Mammary epithelial cell (primary cell): ENCODE measurements at regions of chr11 and their contacts with region 1.

Region 1: DNA sequence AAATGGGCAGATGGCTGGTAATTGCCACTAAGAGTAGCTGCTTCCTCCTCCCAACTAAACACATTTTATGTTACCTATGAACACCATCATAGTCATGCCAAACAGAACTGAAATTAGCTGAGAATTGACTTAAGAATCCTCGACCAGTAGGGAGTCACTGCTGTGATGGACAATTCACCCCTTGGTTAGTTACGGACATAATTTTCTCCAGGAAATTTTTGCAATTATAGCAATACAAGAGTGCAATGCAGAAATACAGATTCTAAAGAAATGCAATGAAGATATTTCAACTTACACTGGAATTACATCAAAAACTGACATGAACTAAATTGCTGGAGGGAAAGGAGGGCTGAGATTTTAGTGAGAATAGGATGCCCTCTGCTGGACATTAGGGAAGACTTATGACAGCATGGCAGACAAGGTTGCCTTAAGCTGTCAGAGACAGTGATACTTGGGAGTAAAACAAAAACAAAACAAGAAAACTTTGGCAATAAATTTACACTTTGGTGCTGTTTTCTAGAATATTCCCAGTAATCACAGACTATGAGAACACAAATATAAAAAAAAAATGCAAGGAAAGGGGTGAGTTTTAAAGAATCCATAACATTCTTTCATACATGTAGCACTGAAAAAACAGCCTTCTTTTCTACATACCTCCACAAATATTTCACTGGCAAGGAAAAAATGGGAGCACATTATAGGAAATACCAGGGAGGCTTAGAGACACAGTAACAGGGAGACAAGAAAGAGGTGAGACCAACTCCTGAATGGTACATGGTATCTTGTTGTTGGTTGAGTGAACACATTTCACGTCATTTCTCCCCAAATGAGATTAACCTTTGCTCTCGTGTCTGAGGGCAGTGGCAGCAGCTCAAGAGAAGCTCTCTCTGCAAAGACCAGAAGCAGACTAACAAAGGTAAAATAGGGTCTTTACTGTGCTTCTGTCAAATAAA is 11.2 kb upstream of the PPP2R1B start:
- DNase-seq: peak; percentile 51
- H3K4me3 ChIP-seq: no peak overlapping the region
- H3K27ac ChIP-seq: no peak overlapping the region
- H3K4me1 ChIP-seq: no peaks in the 10 kb centered on the region
- H3K27me3 ChIP-seq: no peaks in the 10 kb centered on the region
- CTCF ChIP-seq: peak; percentile 68 to 78

Region 2: GRCh38 chr11:111299101-111300026 is 478.0 kb before region 1 on chr11:
- CTCF ChIA-PET with region 1: no interaction called
- dilution Hi-C with region 1: no loop called
- in situ Hi-C with region 1: loop called in 1 of 2 experiments (anchors 25 kb)
- intact Hi-C with region 1: no loop called
- DNase-seq: peak; percentile 17
- H3K4me3 ChIP-seq: peak overlapping the region; percentile 35 to 68 (median 55)
- H3K27ac ChIP-seq: no peak overlapping the region
- H3K4me1 ChIP-seq: peaks cover 7% of the 10 kb centered on the region
- H3K27me3 ChIP-seq: peaks cover 3% of the 10 kb centered on the region
- CTCF ChIP-seq: peak in 1 of 2 donors; percentile 59

Region 3: GRCh38 chr11:111327908-111328624 is 449.3 kb before region 1 on chr11:
- CTCF ChIA-PET with region 1: no interaction called
- dilution Hi-C with region 1: no loop called
- in situ Hi-C with region 1: no loop called
- intact Hi-C with region 1: no loop called
- DNase-seq: no peak
- H3K4me3 ChIP-seq: no peak overlapping the region
- H3K27ac ChIP-seq: no peak overlapping the region
- H3K4me1 ChIP-seq: no peaks in the 10 kb centered on the region
- H3K27me3 ChIP-seq: no peaks in the 10 kb centered on the region
- CTCF ChIP-seq: no peak

Region 4: DNA sequence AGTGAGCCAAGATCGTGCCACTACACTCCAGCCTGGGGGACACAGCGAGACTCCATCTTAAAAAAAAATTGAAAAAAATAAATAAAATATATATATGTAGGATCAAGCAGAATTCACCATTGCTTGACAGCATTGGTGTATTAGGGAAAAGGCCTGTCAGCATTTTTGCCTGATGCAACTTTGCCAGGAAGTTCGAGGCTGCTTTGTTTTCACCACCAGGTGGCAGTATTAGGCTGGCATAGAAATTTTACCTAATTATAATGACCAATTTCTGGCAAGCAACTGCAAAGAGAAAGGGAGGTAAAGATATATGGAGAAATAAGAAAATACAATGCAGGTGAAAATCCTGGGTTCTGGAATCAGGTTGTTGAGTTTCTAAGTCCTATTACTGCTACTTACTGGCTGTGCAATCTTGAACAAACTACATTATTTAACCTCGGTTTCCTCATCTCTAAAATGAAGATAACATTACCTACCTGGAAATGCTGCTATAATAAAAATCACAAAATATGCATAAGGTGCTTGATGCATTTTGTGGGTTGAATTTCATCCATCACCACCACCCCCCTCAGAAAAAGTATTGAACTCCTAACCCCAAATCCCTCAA is 212.2 kb before region 1 on chr11:
- CTCF ChIA-PET with region 1: no interaction called
- dilution Hi-C with region 1: no loop called
- in situ Hi-C with region 1: no loop called
- intact Hi-C with region 1: loop called (anchors 1 kb)
- DNase-seq: peak; percentile 53
- H3K4me3 ChIP-seq: no peak overlapping the region
- H3K27ac ChIP-seq: no peak overlapping the region
- H3K4me1 ChIP-seq: peaks cover 17% of the 10 kb centered on the region
- H3K27me3 ChIP-seq: no peaks in the 10 kb centered on the region
- CTCF ChIP-seq: peak; percentile 86

Region 5: GRCh38 chr11:111601979-111602864 is 175.1 kb before region 1 on chr11 and contains the start of gene SIK2:
- CTCF ChIA-PET with region 1: interaction called, 5 read pairs
- dilution Hi-C with region 1: no loop called
- in situ Hi-C with region 1: loop called (anchors 5 kb)
- intact Hi-C with region 1: loop called (anchors 1 kb)
- DNase-seq: peak; percentile 94
- H3K4me3 ChIP-seq: peak within 1 kb of the TSS; percentile 91 to 98 (median 98)
- H3K27ac ChIP-seq: peak within 1 kb of the TSS; percentile 94
- H3K4me1 ChIP-seq: peaks cover 21% of the 10 kb centered on the region
- H3K27me3 ChIP-seq: no peaks in the 10 kb centered on the region
- CTCF ChIP-seq: peak; percentile 79 to 97
- total RNA-seq, gene SIK2: 15.9 to 17.0 TPM

Region 6: DNA sequence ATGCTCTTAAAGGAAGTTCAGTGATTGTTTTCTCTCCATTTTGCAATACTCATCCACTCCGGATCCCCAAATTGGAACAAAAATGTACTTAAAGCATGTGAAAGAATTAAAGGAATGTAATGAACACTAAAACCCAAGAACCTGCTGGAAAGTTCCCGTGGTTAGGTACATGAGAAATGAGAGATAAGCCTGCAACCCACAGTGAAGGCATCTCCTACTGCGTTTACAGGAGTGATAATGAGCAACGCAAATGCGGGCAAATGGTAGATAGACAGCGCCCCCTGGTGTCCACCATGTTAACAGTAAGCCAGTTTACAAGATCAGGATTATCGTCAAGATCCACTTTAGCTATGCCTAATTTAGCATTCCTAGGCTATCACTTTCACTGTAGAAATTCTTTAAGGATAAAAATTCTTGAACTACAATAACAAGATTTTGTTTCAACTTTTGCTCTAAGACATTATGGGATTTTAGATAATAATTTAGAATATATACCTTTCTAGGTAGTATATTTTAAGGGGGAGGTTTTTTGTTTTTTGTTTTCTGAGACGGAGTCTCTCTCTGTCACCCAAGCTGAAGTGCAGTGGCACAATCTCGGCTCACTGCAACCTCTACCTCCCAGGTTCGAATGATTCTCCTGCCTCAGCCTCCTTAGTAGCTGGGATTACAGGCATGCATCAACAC is 64.1 kb after region 1 on chr11:
- CTCF ChIA-PET with region 1: interaction called, 5 read pairs
- dilution Hi-C with region 1: no loop called
- in situ Hi-C with region 1: no loop called
- intact Hi-C with region 1: loop called (anchors 1 kb)
- DNase-seq: peak; percentile 60
- H3K4me3 ChIP-seq: no peak overlapping the region
- H3K27ac ChIP-seq: no peak overlapping the region
- H3K4me1 ChIP-seq: no peaks in the 10 kb centered on the region
- H3K27me3 ChIP-seq: no peaks in the 10 kb centered on the region
- CTCF ChIP-seq: peak; percentile 87 to 88